ENCODE measurements at regions of chr16 and their contacts with region 1.

Region 1: GRCh38 chr16:81366316-81366932 is 51.7 kb downstream of the GAN start:
- DNase-seq: peak in 4 of 14 experiments; percentile 8 to 73 (median 66)
- ATAC-seq: peak; percentile 81
- H3K4me3 ChIP-seq: no peak overlapping the region
- H3K4me3 Mint-ChIP-seq: no peak overlapping the region
- H3K27ac ChIP-seq: no peak overlapping the region
- H3K27ac Mint-ChIP-seq: no peak overlapping the region
- H3K4me1 ChIP-seq: no peaks in the 10 kb centered on the region
- H3K4me1 Mint-ChIP-seq: no peaks in the 10 kb centered on the region
- H3K27me3 ChIP-seq: no peaks in the 10 kb centered on the region
- H3K27me3 Mint-ChIP-seq: no peaks in the 10 kb centered on the region
- CTCF ChIP-seq: peak; percentile 72

Region 2: GRCh38 chr16:81077076-81077940 is 289.1 kb before region 1 on chr16 and contains the start of gene C16orf46:
- CTCF ChIA-PET with region 1: no interaction called
- POLR2A ChIA-PET with region 1: no interaction called
- intact Hi-C with region 1: no loop called
- DNase-seq: peak; percentile 93 to 99 (median 96)
- ATAC-seq: peak; percentile 68
- H3K4me3 ChIP-seq: peak within 1 kb of the TSS; percentile 90
- H3K4me3 Mint-ChIP-seq: no peak within 1 kb of the TSS
- H3K27ac ChIP-seq: peak within 1 kb of the TSS; percentile 95 to 97
- H3K27ac Mint-ChIP-seq: no peak within 1 kb of the TSS
- H3K4me1 ChIP-seq: peaks cover 15% of the 10 kb centered on the region
- H3K4me1 Mint-ChIP-seq: no peaks in the 10 kb centered on the region
- H3K27me3 ChIP-seq: no peaks in the 10 kb centered on the region
- H3K27me3 Mint-ChIP-seq: no peaks in the 10 kb centered on the region
- CTCF ChIP-seq: no peak
- total RNA-seq, gene C16orf46: 0.55 TPM in 1 of 2 experiments, not detected in the other

Region 3: GRCh38 chr16:81204798-81205680 is 161.4 kb before region 1 on chr16:
- CTCF ChIA-PET with region 1: no interaction called
- POLR2A ChIA-PET with region 1: no interaction called
- intact Hi-C with region 1: loop called in 1 of 2 experiments (anchors 2 kb)
- DNase-seq: peak; percentile 5 to 70 (median 22)
- ATAC-seq: no peak
- H3K4me3 ChIP-seq: no peak overlapping the region
- H3K4me3 Mint-ChIP-seq: no peak overlapping the region
- H3K27ac ChIP-seq: no peak overlapping the region
- H3K27ac Mint-ChIP-seq: no peak overlapping the region
- H3K4me1 ChIP-seq: no peaks in the 10 kb centered on the region
- H3K4me1 Mint-ChIP-seq: no peaks in the 10 kb centered on the region
- H3K27me3 ChIP-seq: peaks cover 0 to 3% of the 10 kb centered on the region in 2 experiments
- H3K27me3 Mint-ChIP-seq: peaks cover 32% of the 10 kb centered on the region
- CTCF ChIP-seq: peak; percentile 95

Region 4: DNA sequence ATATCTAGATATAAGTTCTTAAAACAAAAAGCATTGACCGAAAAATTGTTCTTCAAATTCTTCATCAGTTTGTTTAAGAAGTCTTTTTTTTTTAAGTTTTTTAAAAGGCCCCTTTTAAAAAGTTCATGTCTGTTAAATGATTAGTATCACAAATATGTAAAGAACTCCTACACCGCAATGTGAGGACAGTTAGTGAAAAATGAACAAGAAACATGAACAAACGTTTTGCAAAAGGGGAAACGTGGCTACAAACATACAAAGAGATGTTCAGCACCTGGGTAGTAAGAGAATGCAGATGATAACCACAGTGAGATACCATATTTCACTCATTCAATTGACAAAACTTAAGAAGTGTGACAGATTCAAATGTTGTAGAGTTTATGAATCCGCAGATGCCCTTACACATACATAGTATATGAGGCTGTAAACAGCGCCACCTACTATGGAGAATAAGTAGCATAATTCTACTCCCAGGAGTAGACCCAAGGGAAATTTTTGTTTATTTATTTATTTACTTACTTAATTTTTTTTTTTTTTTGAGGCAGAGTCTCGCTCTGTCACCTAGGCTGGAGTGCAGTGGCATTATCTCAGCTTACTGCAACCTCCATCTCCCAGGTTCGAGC is 16.3 kb before region 1 on chr16:
- CTCF ChIA-PET with region 1: no interaction called
- POLR2A ChIA-PET with region 1: no interaction called
- intact Hi-C with region 1: loop called in 1 of 2 experiments (anchors 2 kb)
- DNase-seq: no peak
- ATAC-seq: no peak
- H3K4me3 ChIP-seq: no peak overlapping the region
- H3K4me3 Mint-ChIP-seq: no peak overlapping the region
- H3K27ac ChIP-seq: no peak overlapping the region
- H3K27ac Mint-ChIP-seq: no peak overlapping the region
- H3K4me1 ChIP-seq: no peaks in the 10 kb centered on the region
- H3K4me1 Mint-ChIP-seq: no peaks in the 10 kb centered on the region
- H3K27me3 ChIP-seq: no peaks in the 10 kb centered on the region
- H3K27me3 Mint-ChIP-seq: no peaks in the 10 kb centered on the region
- CTCF ChIP-seq: no peak

Region 5: DNA sequence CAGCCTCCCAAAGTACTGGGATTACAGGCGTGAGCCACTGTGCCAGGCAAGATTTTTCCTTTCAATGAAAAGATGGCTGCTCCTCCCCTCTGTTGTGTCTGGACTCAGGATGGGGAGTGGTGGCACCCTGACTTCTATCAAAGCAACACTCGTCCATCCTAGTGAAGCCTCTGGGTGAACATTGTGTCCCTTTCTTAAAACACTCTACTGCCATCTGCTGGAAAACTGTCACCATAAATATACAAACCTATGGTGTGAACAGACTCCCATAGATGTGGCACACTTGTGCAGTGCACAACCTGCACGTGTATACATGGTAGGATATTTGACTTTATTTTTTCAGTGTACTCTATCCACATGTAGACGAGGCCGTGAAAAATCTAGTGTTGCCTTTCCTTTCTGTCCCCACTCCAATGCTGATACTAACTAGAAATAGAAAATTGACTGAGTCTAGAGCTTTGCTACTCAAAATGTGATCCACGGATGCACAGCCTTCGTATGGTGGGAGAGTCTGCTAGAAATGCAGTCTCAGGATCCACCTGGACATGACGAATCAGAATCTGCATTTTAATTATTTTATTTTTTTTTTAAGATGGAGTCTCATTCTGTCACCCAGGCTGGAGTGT is 356.8 kb after region 1 on chr16:
- CTCF ChIA-PET with region 1: interaction called, 7 read pairs
- POLR2A ChIA-PET with region 1: no interaction called
- intact Hi-C with region 1: loop called (anchors 1 kb)
- DNase-seq: peak in 10 of 14 experiments; percentile 11 to 86 (median 26)
- ATAC-seq: peak; percentile 67
- H3K4me3 ChIP-seq: no peak overlapping the region
- H3K4me3 Mint-ChIP-seq: no peak overlapping the region
- H3K27ac ChIP-seq: no peak overlapping the region
- H3K27ac Mint-ChIP-seq: peak overlapping the region; percentile 11
- H3K4me1 ChIP-seq: peaks cover 13% of the 10 kb centered on the region
- H3K4me1 Mint-ChIP-seq: peaks cover 15% of the 10 kb centered on the region
- H3K27me3 ChIP-seq: no peaks in the 10 kb centered on the region
- H3K27me3 Mint-ChIP-seq: no peaks in the 10 kb centered on the region
- CTCF ChIP-seq: peak; percentile 85

Region 6: DNA sequence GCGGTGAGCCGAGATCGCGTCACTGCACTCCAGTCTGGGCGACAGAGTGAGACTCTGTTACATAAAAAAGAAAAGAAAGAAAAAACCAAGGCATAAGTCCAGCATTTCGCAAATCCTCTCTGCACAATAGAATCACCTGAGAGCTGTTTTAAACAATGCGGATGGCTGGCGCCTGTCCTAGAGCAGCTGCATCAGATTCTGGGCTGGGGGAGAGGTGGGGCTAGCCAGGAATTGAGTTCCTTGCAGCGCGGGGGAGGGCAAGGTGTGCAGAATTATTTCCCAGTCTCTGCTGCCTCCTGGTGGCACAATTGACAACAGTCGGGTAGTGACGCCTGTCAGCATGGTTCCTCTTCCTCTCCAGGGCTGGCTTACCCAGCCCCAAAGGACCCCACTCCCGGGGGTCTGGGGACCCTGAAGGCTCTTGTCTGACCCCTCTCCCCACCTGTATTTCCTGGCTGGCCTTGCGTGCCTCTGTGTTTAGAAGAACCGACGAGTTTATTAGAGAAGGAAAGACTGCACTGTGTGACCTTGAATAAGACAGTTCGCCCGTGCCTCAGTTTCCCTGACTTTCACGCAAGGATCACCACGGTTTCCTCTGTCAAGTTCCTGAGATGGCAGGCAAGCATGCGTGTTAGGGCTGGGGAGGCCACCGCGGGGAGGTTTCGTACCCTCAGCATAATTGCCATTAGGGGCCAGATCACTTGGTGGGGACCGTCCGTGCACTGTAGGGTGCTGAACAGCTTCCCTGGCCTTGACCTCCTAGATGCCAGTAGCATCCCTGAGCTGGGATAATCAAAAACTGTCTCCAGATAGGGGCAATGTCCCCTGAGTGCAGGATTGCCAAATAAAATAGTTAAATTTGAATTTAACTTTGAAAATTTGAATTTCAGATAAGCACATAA is 371.7 kb after region 1 on chr16:
- CTCF ChIA-PET with region 1: interaction called, 3 read pairs
- POLR2A ChIA-PET with region 1: no interaction called
- intact Hi-C with region 1: loop called (anchors 1 kb)
- DNase-seq: peak; percentile 78 to 93 (median 85)
- ATAC-seq: peak; percentile 98
- H3K4me3 ChIP-seq: peak overlapping the region; percentile 29
- H3K4me3 Mint-ChIP-seq: peak overlapping the region; percentile 72
- H3K27ac ChIP-seq: no peak overlapping the region
- H3K27ac Mint-ChIP-seq: peak overlapping the region; percentile 47
- H3K4me1 ChIP-seq: peaks cover 24% of the 10 kb centered on the region
- H3K4me1 Mint-ChIP-seq: peaks cover 8% of the 10 kb centered on the region
- H3K27me3 ChIP-seq: no peaks in the 10 kb centered on the region
- H3K27me3 Mint-ChIP-seq: no peaks in the 10 kb centered on the region
- CTCF ChIP-seq: peak; percentile 91

Region 7: DNA sequence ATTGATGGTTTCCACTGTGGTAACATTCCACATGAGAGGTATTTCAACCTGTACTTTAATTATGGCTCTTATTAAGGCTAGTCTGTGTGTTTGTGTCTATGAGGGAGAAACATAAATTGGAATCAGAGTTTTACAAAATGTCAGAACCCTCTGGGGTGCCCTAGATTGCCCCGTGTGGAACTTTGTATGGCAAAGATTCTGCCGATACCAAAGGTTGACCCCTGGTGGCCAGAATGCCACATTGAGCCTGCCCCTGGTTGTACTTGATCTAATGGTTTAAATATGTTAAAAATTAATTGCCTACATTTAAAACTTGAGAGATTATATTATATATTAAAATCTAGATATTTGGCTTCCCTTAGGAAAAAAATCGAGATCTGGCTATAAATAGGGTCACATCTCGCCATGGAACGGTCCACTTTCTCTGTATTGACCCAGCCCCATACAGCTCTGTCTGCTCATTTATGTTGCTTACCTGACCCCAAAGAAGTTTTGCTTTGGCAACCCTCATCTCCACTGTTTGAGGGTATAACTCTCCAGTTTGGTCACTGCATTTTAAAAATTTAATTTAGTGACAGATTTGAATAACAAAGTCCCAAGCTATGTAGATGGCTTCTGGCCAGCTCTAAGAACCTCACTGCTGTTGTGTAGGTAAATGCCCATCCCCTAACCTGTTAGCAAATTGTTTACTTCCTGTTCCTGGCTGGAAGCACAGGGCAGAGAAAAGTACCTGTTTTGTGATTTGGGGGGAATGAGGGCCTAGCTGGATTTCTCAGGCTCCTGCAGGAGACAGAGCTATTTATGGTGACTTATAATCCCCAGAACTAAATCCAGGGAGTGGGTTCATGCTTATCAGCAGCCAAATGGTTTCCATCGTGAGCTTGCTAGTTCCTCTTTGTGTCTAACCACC is 507.7 kb after region 1 on chr16:
- CTCF ChIA-PET with region 1: interaction called, 3 read pairs
- POLR2A ChIA-PET with region 1: no interaction called
- intact Hi-C with region 1: loop called (anchors 2 to 5 kb)
- DNase-seq: peak in 11 of 14 experiments; percentile 11 to 57 (median 30)
- ATAC-seq: peak; percentile 55
- H3K4me3 ChIP-seq: no peak overlapping the region
- H3K4me3 Mint-ChIP-seq: no peak overlapping the region
- H3K27ac ChIP-seq: no peak overlapping the region
- H3K27ac Mint-ChIP-seq: no peak overlapping the region
- H3K4me1 ChIP-seq: peaks cover 3% of the 10 kb centered on the region
- H3K4me1 Mint-ChIP-seq: peaks cover 4% of the 10 kb centered on the region
- H3K27me3 ChIP-seq: no peaks in the 10 kb centered on the region
- H3K27me3 Mint-ChIP-seq: no peaks in the 10 kb centered on the region
- CTCF ChIP-seq: peak; percentile 65

Region 8: GRCh38 chr16:81885976-81886586 is 519.7 kb after region 1 on chr16:
- CTCF ChIA-PET with region 1: no interaction called
- POLR2A ChIA-PET with region 1: no interaction called
- intact Hi-C with region 1: loop called (anchors 2 to 5 kb)
- DNase-seq: peak in 4 of 14 experiments; percentile 9 to 41 (median 26)
- ATAC-seq: no peak
- H3K4me3 ChIP-seq: no peak overlapping the region
- H3K4me3 Mint-ChIP-seq: no peak overlapping the region
- H3K27ac ChIP-seq: no peak overlapping the region
- H3K27ac Mint-ChIP-seq: no peak overlapping the region
- H3K4me1 ChIP-seq: no peaks in the 10 kb centered on the region
- H3K4me1 Mint-ChIP-seq: no peaks in the 10 kb centered on the region
- H3K27me3 ChIP-seq: no peaks in the 10 kb centered on the region
- H3K27me3 Mint-ChIP-seq: no peaks in the 10 kb centered on the region
- CTCF ChIP-seq: peak; percentile 70

Measured in CD4-positive, alpha-beta T cell (primary cell).